Vagina (tissue), 2 donors: ENCODE measurements at regions of chr9 and their contacts with region 1.

Region 1: DNA sequence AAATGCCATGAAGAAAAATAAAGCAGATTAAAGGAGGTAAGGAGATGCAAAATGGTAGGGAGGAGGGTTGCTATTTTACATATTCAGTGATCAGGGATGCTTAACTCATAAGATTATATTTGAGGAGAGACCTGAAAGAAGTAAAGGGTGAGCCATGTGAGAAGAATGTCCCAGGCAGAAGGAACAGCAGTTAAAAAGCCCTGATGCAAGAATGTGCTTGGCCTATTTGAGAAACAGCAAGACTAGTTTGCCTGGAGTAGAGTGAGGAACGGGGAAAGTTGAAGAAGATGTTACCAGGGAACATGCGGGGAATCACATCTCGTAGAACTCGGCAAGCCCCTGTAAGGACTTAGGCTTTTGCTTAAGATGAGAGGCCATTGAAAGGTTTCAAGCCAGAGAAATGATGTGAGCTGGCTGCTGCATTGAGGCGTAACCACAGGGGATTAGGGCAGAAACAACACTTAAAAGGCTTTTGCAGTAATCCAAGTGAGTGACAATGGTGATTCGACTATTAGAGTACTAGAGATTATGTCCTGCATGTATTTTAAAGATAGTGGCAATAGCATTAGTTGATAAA is 198.7 kb downstream of the VPS13A start:
- DNase-seq: no peak
- H3K4me3 ChIP-seq: no peak overlapping the region
- H3K27ac ChIP-seq: no peak overlapping the region
- H3K4me1 ChIP-seq: no peaks in the 10 kb centered on the region
- H3K27me3 ChIP-seq: no peaks in the 10 kb centered on the region
- CTCF ChIP-seq: no peak
- POLR2A ChIP-seq: no peak

Region 2: GRCh38 chr9:78769690-78770089 is 1393.6 kb after region 1 on chr9:
- intact Hi-C with region 1: loop called (anchors 5 kb)
- DNase-seq: no peak
- H3K4me3 ChIP-seq: no peak overlapping the region
- H3K27ac ChIP-seq: no peak overlapping the region
- H3K4me1 ChIP-seq: no peaks in the 10 kb centered on the region
- H3K27me3 ChIP-seq: no peaks in the 10 kb centered on the region
- CTCF ChIP-seq: no peak
- POLR2A ChIP-seq: no peak